PC-3 (cell line): ENCODE measurements at regions of chr7 and their contacts with region 1.

Region 1: DNA sequence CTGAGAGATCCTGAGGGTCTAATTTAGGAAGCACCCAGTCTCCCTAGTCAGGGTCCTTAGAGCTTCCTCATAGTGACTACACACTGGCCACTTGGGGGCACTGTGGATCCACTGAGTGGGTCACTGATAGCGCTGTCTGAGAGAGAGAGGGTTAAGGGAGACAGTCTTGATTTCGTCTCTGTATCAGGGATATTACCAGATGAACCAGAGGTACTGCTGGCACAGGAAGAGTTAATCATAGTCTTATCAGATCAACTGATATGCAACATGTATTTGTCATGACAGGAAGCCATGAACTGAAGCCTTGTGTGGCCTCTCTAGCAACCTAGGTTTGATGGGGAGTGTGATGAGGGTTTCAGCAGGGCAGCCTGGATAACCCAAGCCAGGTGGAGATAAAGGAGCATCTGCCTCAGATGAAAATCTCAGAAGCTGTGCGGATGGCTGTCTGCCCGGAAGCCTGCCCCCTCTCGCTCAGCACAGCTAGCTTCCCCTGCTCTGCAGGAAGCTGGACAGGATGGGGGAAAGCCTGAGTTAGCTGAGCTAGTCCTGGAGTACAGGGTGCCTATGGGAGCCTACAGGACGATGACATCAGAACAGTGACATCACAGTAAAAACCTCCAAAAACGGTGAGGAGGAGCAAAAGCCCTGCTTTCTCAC is 214.0 kb upstream of the PRSS1 start:
- DNase-seq: peak; percentile 94
- ATAC-seq: peak; percentile 92
- H3K4me3 ChIP-seq: no peak overlapping the region
- H3K27ac ChIP-seq: no peak overlapping the region
- H3K4me1 ChIP-seq: peaks cover 24% of the 10 kb centered on the region
- H3K27me3 ChIP-seq: no peaks in the 10 kb centered on the region
- CTCF ChIP-seq: peak; percentile 94

Region 2: GRCh38 chr7:142319970-142320369 is 215.3 kb before region 1 on chr7:
- CTCF ChIA-PET with region 1: no interaction called
- POLR2A ChIA-PET with region 1: no interaction called
- intact Hi-C with region 1: no loop called
- DNase-seq: peak; percentile 40
- ATAC-seq: peak; percentile 31; the same call in 1 of the 2 replicates
- H3K4me3 ChIP-seq: no peak overlapping the region
- H3K27ac ChIP-seq: no peak overlapping the region
- H3K4me1 ChIP-seq: no peaks in the 10 kb centered on the region
- H3K27me3 ChIP-seq: peaks cover 66% of the 10 kb centered on the region
- CTCF ChIP-seq: peak; percentile 67

Region 3: GRCh38 chr7:142557971-142558582 is 22.8 kb after region 1 on chr7:
- CTCF ChIA-PET with region 1: interaction called, 7 read pairs
- POLR2A ChIA-PET with region 1: no interaction called
- intact Hi-C with region 1: loop called (anchors 1 kb)
- DNase-seq: peak; percentile 79
- ATAC-seq: peak; percentile 20; the same call in 1 of the 2 replicates
- H3K4me3 ChIP-seq: no peak overlapping the region
- H3K27ac ChIP-seq: peak overlapping the region; percentile 58; the same call in 1 of the 2 replicates
- H3K4me1 ChIP-seq: peaks cover 67% of the 10 kb centered on the region
- H3K27me3 ChIP-seq: no peaks in the 10 kb centered on the region
- CTCF ChIP-seq: peak; percentile 92

Region 4: DNA sequence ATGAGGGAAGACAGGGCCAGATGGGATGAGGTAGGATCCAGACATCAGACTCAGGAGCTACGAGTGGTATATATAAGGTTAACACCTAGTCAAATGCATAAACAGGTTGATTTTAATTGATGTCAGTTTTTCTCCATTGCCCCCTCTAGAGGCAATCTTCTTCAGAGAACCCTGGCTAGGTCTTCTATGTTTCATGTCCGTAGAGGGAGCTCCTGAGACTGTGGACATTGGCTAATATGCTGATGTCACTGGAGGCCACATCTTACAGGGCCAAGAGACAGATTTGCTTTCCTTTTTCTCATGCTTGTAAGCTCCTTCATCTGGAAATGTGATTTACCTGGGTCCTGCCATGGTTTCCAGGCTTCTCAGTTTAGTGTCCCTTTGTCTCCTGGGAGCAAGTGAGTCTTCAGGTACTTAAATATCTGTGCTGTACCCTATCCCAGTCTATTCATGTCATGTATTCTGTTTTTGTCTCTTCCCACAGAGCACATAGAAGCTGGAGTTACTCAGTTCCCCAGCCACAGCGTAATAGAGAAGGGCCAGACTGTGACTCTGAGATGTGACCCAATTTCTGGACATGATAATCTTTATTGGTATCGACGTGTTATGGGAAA is 52.4 kb after region 1 on chr7:
- CTCF ChIA-PET with region 1: interaction called, 28 read pairs
- POLR2A ChIA-PET with region 1: no interaction called
- intact Hi-C with region 1: loop called (anchors 1 kb)
- DNase-seq: peak; percentile 82
- ATAC-seq: peak; percentile 75
- H3K4me3 ChIP-seq: no peak overlapping the region
- H3K27ac ChIP-seq: no peak overlapping the region
- H3K4me1 ChIP-seq: peaks cover 25% of the 10 kb centered on the region
- H3K27me3 ChIP-seq: no peaks in the 10 kb centered on the region
- CTCF ChIP-seq: peak; percentile 96

Region 5: GRCh38 chr7:142632291-142633134 is 97.3 kb after region 1 on chr7:
- CTCF ChIA-PET with region 1: interaction called, 17 read pairs
- POLR2A ChIA-PET with region 1: no interaction called
- intact Hi-C with region 1: loop called (anchors 2 kb)
- DNase-seq: peak; percentile 87
- ATAC-seq: peak; percentile 96
- H3K4me3 ChIP-seq: no peak overlapping the region
- H3K27ac ChIP-seq: no peak overlapping the region
- H3K4me1 ChIP-seq: no peaks in the 10 kb centered on the region; the same call in 1 of the 2 replicates
- H3K27me3 ChIP-seq: peaks cover 7% of the 10 kb centered on the region; the same call in 1 of the 2 replicates
- CTCF ChIP-seq: peak; percentile 83

Region 6: DNA sequence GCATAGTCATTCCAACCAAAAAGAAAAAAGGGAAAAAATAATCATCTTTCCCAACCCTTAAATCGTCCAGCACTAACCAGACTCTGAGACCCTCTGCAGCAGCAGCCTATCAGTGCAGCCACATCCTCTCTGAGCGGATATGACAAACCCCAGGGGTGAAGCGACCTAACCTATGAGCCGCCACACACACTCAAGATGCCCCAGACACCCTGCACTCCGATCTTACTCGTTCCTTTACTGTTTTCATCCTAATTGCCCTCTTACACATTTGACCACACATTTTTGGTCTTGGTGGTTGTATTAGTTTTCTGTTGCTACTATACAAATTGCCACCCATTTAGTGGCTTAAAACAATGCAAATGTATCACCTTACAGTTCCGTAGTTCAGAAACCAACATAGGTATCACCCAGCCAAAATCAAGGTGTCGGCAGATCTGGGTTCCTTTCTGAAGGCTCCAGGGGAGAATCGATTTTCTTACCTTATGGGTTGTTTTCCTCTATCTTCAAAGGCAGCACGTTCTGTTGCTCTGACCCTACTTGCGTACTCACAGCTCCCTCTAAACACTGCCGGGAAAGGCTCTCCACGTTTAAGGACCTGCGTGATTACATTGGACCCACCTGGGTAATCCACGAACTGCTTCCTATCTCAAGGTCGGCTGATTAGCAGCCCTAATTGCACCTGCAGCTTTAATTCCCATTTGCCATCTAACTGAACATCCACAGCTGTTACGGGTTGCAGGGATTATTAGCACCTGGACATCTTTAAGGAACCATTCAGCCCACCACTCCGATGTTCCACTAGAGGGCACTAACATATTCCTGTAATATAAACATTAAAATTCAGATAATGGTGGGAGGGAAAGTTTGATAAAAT is 176.7 kb after region 1 on chr7:
- CTCF ChIA-PET with region 1: interaction called, 7 read pairs
- POLR2A ChIA-PET with region 1: no interaction called
- intact Hi-C with region 1: loop called (anchors 2 kb)
- DNase-seq: peak; percentile 66
- ATAC-seq: peak; percentile 75; the same call in 1 of the 2 replicates
- H3K4me3 ChIP-seq: no peak overlapping the region
- H3K27ac ChIP-seq: no peak overlapping the region
- H3K4me1 ChIP-seq: no peaks in the 10 kb centered on the region
- H3K27me3 ChIP-seq: peaks cover 3% of the 10 kb centered on the region; the same call in 1 of the 2 replicates
- CTCF ChIP-seq: peak; percentile 85

Region 7: DNA sequence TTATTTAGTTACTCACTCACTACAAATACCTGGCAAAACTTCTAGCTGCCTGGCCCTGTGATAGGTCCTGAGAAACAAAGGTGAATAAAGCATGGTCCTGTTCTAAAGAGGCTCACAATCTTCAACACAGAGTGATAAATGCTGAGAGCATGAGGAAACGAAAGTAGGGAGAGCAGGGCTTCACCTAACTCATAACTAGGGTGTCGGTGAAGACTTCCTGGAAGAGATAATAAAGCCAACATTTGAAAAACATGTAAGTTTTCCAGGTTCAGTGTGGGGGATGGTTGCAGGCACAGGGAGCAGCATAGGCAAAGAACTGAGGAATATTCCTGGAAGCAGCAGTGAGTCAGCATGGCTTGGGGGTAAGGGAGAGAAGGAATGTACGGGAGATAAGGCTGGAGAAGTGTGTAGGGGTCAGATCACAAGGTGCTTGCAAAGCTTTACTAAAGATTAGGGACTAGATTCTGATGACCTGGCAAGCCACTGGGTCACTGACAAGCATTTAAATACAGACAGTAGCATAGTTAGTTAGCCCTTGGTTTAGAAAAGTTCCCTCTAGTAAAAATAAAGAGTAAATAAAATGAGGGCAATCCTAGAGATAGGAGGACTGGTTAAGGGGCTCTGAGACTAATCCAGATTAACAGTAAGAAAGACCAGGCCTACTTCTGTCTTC is 421.8 kb after region 1 on chr7:
- CTCF ChIA-PET with region 1: no interaction called
- POLR2A ChIA-PET with region 1: no interaction called
- intact Hi-C with region 1: no loop called
- DNase-seq: peak; percentile 66
- ATAC-seq: peak; percentile 67
- H3K4me3 ChIP-seq: peak overlapping the region; percentile 36; the same call in 1 of the 2 replicates
- H3K27ac ChIP-seq: peak overlapping the region; percentile 53
- H3K4me1 ChIP-seq: peaks cover 24% of the 10 kb centered on the region
- H3K27me3 ChIP-seq: peaks cover 39% of the 10 kb centered on the region
- CTCF ChIP-seq: no peak